IMR-90 (cell line): ENCODE measurements at regions of chr17 and their contacts with region 1.

Region 1: DNA sequence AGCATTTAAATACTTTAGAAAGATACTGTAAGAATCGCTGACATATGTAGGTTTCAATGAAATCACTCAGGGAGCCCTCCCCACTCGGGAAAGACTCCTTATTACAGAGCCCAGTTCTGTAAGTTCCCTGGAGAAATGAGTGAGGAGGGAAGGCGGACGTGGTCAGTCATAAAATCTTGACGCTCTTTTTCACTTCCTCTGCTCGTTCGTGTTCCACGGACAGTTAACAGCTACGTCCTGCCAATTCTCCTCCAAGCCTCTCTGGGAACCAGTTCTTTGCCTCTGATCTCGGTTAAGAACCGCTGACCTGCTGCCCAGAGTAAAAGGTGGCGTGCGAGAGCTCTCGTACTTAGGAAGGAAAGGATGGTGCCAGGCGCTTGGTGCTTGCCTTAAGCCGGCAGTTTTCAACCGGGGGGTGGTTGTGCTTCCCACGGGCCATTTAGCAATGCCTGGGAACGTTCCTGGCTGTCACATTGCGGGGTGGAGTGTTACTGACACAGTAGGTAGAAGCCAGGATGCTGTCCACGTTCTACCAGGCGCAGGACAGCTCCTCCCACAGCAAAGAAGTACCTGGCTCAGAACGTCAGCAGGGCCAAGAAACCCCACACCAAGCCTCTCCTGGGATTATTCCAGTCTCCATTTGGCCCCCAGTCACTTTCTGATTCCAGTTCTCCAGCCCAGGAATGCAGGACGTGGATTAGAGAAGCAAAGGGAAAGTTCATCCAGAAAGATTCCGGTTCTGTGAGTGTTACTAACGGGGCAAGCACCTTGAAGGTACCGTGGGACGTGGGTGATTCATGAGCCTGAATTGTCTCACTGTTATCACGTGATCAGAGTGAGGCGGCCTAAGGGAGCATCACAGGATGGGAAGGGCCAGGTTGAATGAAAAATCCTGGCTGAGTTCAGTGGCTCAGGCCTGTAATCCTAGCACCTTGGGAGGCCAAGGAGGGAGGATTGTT is 87.7 kb downstream of the MRM3 start:
- DNase-seq: peak; percentile 76
- ATAC-seq: peak; percentile 37
- H3K4me3 ChIP-seq: no peak overlapping the region
- H3K27ac ChIP-seq: peak overlapping the region; percentile 4; the same call in 1 of the 2 replicates
- H3K4me1 ChIP-seq: peaks cover 20% of the 10 kb centered on the region
- H3K27me3 ChIP-seq: no peaks in the 10 kb centered on the region
- CTCF ChIP-seq: no peak
- POLR2A ChIP-seq: no peak
- RAD21 ChIP-seq: no peak

Region 2: DNA sequence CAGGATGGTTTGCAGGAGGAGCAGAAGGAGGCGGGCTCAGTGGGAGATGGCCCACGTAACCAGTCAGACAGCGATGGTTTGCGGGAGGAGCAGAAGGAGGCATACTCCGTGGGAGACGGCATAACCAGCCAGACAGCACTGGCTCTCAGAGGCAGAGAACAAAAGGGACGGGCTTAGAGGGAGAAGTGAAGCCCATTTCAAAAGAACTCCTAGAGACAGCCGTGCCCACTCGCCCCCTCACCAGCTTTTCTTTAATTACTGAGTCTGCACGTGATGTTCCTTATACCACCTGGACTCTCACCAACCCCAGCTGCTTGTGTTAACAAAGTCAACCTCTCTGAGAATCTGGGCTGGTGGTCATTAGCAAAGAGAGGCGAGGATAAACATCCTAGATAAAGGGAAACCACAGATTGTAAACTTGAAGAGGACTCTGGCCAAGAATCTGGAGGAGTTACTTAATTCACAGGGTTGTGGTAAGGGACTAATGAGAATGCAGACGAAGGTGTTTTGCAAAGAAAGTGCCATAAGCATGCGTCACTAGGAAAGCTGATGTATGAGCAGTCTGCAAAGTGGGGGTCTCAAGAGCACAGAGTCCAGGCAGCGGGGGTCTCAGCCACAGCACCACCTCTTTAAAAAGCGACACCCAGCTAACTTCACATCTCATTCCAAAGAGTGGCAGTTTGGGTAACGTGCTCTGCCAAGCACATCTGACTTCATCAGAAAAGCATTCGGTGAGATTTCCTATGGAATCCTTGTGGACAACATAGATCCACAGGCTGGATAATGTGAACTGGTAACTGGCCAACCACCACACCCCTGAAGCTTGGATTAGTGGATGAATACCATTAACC is 58.0 kb after region 1 on chr17:
- CTCF ChIA-PET with region 1: no interaction called
- POLR2A ChIA-PET with region 1: no interaction called
- dilution Hi-C with region 1: no loop called
- in situ Hi-C with region 1: no loop called
- intact Hi-C with region 1: loop called (anchors 2 kb)
- DNase-seq: peak; percentile 97
- ATAC-seq: peak; percentile 89
- H3K4me3 ChIP-seq: peak overlapping the region; percentile 1; the same call in 1 of the 2 replicates
- H3K27ac ChIP-seq: peak overlapping the region; percentile 92
- H3K4me1 ChIP-seq: peaks cover 28% of the 10 kb centered on the region
- H3K27me3 ChIP-seq: no peaks in the 10 kb centered on the region
- CTCF ChIP-seq: no peak
- POLR2A ChIP-seq: 0 out of 2 replicates have a peak, but pooled peaks have one; percentile 50
- RAD21 ChIP-seq: no peak; the same call in 1 of the 2 replicates